ENCODE measurements at regions of chr2 and their contacts with region 1.

Region 1: DNA sequence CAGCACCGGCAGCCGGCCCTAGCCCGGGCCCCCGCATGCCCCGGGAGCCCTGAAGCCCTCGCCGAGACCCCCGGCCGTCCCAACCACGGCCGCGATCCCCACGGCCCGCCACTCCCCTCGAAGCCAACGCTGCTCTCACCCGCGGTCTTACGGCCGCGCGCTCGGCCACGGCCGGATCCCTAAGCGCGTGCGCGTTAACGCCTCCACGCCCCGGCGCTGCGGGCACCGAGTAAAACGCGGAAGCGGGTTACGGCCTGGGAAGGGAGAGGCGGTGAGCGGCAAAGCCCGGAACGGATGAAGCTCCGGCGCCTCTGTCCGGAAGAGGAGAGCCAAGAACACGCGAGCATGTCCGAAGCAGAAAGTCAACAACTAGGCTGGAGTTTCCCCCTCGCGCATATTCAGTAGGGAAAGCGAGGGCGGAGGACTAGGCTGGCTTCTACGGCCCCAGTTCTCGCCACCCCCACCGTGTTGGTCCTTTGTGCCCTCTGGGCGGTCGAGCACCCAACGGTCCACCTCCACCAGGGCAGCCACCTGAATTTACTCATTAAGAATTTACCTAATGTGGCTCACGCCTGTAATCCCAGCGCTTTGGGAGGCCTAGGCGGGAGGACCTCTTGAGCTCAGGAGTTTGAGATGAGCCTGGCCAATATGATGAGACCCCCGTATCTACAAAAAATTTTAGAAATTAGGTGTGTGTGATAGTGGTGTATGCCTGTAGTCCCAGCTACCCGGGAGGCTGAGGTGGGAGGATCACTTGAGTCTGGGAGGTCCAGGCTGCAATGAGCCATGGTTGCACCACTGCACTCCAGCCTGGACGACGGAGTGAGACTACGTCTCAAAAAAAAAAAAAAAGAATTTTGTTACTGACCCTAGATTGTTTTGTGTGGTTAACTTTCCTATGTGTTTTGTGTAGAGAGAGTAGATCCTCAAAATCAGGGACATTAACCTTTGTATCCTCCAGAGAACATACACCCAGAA is at the start of gene KANSL3:
- DNase-seq: peak; percentile 92
- H3K4me3 Mint-ChIP-seq: peak within 1 kb of the TSS; percentile 93
- H3K27ac Mint-ChIP-seq: peak within 1 kb of the TSS; percentile 85
- H3K4me1 Mint-ChIP-seq: peaks cover 31% of the 10 kb centered on the region
- H3K27me3 Mint-ChIP-seq: no peaks in the 10 kb centered on the region
- total RNA-seq, gene KANSL3: 33.0 to 37.5 TPM

Region 2: GRCh38 chr2:96305091-96305978 is 333.1 kb before region 1 on chr2 and contains the start of gene SNRNP200:
- CTCF ChIA-PET with region 1: no interaction called
- intact Hi-C with region 1: loop called (anchors 5 kb)
- DNase-seq: peak; percentile 92
- H3K4me3 Mint-ChIP-seq: peak within 1 kb of the TSS; percentile 100
- H3K27ac Mint-ChIP-seq: peak within 1 kb of the TSS; percentile 98
- H3K4me1 Mint-ChIP-seq: peaks cover 49% of the 10 kb centered on the region
- H3K27me3 Mint-ChIP-seq: no peaks in the 10 kb centered on the region
- total RNA-seq, gene SNRNP200: 179 to 181 TPM

Region 3: DNA sequence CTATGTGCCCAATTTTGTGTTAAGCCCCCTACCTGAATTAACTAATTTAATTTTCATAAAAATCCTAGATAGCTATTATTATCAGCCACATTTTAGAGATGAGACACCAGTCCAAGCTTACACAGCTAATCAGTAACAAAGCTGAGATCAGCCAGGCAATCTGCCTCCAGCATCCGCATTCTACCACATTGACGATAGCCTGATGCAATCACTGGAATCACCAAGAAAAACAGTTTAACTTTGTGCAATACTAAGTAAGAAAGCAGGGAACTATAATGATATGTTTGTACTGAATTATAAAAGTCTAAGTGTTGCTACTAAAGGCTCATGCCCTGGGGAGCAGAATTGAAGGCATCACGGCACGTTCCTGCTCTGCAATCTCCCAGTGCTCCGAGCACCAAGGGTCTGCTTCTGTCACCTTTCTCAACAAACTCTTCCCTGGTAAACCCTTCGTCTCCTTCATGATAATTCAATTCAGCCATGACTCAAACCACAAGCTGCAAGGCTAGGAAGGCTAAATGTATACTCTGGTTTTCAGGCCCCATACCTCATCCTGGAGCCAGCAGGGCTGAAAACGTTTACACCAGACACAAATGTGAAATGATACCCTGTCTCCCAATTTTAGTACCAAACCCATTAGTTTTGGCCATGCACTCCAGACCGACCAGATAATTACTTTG is 19.7 kb before region 1 on chr2:
- CTCF ChIA-PET with region 1: interaction called, 3 read pairs
- intact Hi-C with region 1: loop called (anchors 1 kb)
- DNase-seq: no peak
- H3K4me3 Mint-ChIP-seq: no peak overlapping the region
- H3K27ac Mint-ChIP-seq: no peak overlapping the region
- H3K4me1 Mint-ChIP-seq: peaks cover 19% of the 10 kb centered on the region
- H3K27me3 Mint-ChIP-seq: no peaks in the 10 kb centered on the region

Region 4: DNA sequence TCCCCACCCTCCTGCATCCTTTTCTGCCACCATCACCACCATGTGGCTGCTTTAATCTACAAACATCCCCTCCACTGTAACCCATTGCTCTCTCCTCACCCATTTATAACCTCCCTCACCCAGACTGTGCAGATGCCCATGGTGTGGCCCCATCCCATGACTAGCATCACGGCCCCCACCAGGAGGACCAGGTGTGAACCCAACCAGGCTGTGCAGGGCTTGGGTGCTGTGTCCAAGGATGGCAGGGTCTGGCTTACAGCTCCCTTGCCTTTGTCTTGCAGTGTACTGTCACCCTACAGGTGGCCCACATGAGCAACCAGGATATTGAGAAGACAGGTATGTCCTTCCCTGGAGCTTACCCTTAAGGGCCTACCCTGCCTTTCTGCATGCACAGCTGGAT is 10.9 kb after region 1 on chr2:
- CTCF ChIA-PET with region 1: no interaction called
- intact Hi-C with region 1: no loop called
- DNase-seq: no peak
- H3K4me3 Mint-ChIP-seq: no peak overlapping the region
- H3K27ac Mint-ChIP-seq: no peak overlapping the region
- H3K4me1 Mint-ChIP-seq: no peaks in the 10 kb centered on the region
- H3K27me3 Mint-ChIP-seq: no peaks in the 10 kb centered on the region

Region 5: GRCh38 chr2:96801005-96801785 is 162.8 kb after region 1 on chr2:
- CTCF ChIA-PET with region 1: interaction called, 5 read pairs
- intact Hi-C with region 1: loop called (anchors 5 kb)
- DNase-seq: peak; percentile 83
- H3K4me3 Mint-ChIP-seq: no peak overlapping the region
- H3K27ac Mint-ChIP-seq: no peak overlapping the region
- H3K4me1 Mint-ChIP-seq: peaks cover 2% of the 10 kb centered on the region
- H3K27me3 Mint-ChIP-seq: no peaks in the 10 kb centered on the region

Region 6: GRCh38 chr2:96960153-96960961 is 321.9 kb after region 1 on chr2:
- CTCF ChIA-PET with region 1: no interaction called
- intact Hi-C with region 1: loop called (anchors 5 kb)
- DNase-seq: peak; percentile 92
- H3K4me3 Mint-ChIP-seq: no peak overlapping the region
- H3K27ac Mint-ChIP-seq: no peak overlapping the region
- H3K4me1 Mint-ChIP-seq: peaks cover 49% of the 10 kb centered on the region
- H3K27me3 Mint-ChIP-seq: no peaks in the 10 kb centered on the region

Measured in activated naive CD4-positive, alpha-beta T cell treated with anti-CD3 and anti-CD28 coated beads for 36 hours (primary cell).